Naive thymus-derived CD4-positive, alpha-beta T cell (primary cell): ENCODE measurements at regions of chr11 and their contacts with region 1.

Region 1: DNA sequence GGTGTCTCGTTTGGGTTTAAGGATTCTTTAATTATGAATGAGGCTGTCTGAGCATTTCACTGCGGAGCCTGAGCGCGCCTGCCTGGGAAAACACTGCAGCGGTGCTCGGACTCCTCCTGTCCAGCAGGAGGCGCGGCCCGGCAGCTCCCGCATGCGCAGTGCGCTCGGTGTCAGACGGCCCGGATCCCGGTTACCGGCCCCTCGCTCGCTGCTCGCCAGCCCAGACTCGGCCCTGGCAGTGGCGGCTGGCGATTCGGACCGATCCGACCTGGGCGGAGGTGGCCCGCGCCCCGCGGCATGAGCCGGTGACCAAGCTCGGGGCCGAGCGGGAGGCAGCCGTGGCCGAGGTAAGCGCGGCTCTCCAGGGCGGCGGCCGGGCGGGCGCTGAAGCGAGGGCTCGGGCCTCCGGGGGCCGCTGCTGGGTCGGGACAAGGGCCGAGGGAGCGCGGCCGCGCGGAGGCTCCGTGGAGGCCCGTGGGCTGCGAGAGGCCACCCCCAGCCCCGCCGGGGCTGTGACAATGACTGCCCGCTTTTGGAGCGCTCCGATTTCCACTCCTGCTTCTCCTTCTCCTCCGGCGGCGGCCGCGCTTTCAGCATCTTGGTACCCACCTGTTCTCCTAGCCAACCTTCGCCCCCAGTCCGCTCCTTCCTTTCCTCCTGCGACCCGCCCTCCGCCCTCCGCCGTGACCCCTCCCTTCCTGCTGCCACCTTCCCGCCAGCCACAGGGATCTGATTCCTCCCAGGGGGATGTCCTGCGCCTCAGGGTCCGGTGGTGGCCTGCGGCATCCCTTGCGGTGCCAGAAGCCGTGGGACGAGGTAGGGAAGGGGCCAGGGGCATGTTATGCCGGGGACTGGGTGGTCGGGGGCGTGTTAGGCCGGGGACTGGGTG is at the start of gene EXT2:
- DNase-seq: peak; percentile 71 to 90 (median 83)
- ATAC-seq: peak; percentile 97
- H3K4me3 ChIP-seq: peak within 1 kb of the TSS; percentile 74
- H3K4me3 Mint-ChIP-seq: peak within 1 kb of the TSS; percentile 78 to 94 (median 87)
- H3K27ac ChIP-seq: peak within 1 kb of the TSS; percentile 76
- H3K27ac Mint-ChIP-seq: peak within 1 kb of the TSS in 8 of 9 donors; percentile 19 to 86 (median 70)
- H3K4me1 ChIP-seq: peaks cover 9 to 15% of the 10 kb centered on the region in 2 donors
- H3K4me1 Mint-ChIP-seq: peaks cover 25 to 53% (median 40%) of the 10 kb centered on the region in 7 donors
- H3K27me3 ChIP-seq: no peaks in the 10 kb centered on the region
- H3K27me3 Mint-ChIP-seq: peaks cover 0 to 3% (median 0%) of the 10 kb centered on the region in 5 donors
- total RNA-seq, gene EXT2: 27.2 to 33.4 (median 30.7) TPM

Region 2: DNA sequence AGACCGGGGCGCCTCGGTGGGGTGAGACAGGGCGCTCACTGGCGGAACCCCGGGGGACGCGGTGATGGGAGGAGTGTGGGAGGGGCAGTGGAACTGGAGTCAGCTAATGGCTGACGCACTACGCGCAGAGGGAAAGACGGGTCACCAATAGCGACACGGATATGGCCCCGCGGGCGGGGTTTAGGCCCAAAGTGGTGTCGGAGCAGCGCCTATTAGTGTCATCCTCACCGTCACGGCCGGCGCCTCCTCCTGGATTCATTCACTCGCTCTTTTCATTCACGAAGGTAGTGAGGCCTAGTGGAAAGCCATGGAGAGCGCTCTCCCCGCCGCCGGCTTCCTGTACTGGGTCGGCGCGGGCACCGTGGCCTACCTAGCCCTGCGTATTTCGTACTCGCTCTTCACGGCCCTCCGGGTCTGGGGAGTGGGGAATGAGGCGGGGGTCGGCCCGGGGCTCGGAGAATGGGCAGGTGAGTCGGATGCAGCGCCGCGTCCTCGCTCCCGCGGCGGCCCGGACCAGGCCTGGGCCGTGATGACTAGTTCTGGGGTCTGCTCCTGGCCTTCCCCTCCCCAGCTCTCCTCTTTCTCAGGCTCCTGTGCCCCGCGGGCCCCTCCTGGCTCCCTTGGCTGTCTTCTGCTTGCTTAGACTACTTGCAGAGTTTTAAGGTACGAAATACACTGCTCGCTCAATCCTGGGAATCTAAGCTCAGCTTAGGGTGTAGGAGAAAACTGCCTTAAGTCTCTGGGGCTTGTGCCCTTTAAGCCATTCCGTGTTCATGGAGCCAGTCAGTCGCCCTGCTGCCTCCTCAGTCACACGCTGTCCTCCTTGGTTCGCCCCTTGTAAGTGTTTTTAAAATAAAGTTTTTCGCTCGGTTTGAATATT is 415.0 kb before region 1 on chr11 and contains the start of gene HSD17B12:
- CTCF ChIA-PET with region 1: no interaction called
- POLR2A ChIA-PET with region 1: no interaction called
- intact Hi-C with region 1: loop called (anchors 10 kb)
- DNase-seq: peak; percentile 91 to 100 (median 99)
- ATAC-seq: peak; percentile 99
- H3K4me3 ChIP-seq: peak within 1 kb of the TSS; percentile 81
- H3K4me3 Mint-ChIP-seq: peak within 1 kb of the TSS; percentile 85 to 99 (median 96)
- H3K27ac ChIP-seq: peak within 1 kb of the TSS; percentile 89
- H3K27ac Mint-ChIP-seq: peak within 1 kb of the TSS; percentile 84 to 98 (median 97)
- H3K4me1 ChIP-seq: peaks cover 4 to 8% of the 10 kb centered on the region in 2 donors
- H3K4me1 Mint-ChIP-seq: peaks cover 11 to 59% (median 43%) of the 10 kb centered on the region in 7 donors
- H3K27me3 ChIP-seq: no peaks in the 10 kb centered on the region
- H3K27me3 Mint-ChIP-seq: peaks cover 0 to 14% (median 2%) of the 10 kb centered on the region in 5 donors
- total RNA-seq, gene HSD17B12: 21.1 to 39.5 (median 24.7) TPM

Region 3: GRCh38 chr11:44065841-44066731 is 29.7 kb before region 1 on chr11 and contains the start of gene ACCS:
- CTCF ChIA-PET with region 1: interaction called, 10 read pairs
- POLR2A ChIA-PET with region 1: interaction called, 3 read pairs
- intact Hi-C with region 1: loop called (anchors 1 kb)
- DNase-seq: peak; percentile 80 to 91 (median 88)
- ATAC-seq: peak; percentile 98
- H3K4me3 ChIP-seq: peak within 1 kb of the TSS; percentile 88
- H3K4me3 Mint-ChIP-seq: peak within 1 kb of the TSS; percentile 79 to 97 (median 94)
- H3K27ac ChIP-seq: peak within 1 kb of the TSS; percentile 87
- H3K27ac Mint-ChIP-seq: peak within 1 kb of the TSS; percentile 84 to 97 (median 94)
- H3K4me1 ChIP-seq: peaks cover 6 to 12% of the 10 kb centered on the region in 2 donors
- H3K4me1 Mint-ChIP-seq: peaks cover 12 to 53% (median 26%) of the 10 kb centered on the region in 7 donors
- H3K27me3 ChIP-seq: no peaks in the 10 kb centered on the region
- H3K27me3 Mint-ChIP-seq: no peaks in the 10 kb centered on the region
- total RNA-seq, gene ACCS: 25.1 to 79.2 (median 57.6) TPM

Region 4: GRCh38 chr11:44120169-44120568 is 24.4 kb after region 1 on chr11:
- CTCF ChIA-PET with region 1: interaction called, 11 read pairs
- POLR2A ChIA-PET with region 1: no interaction called
- intact Hi-C with region 1: loop called in 1 of 2 experiments (anchors 2 kb)
- DNase-seq: no peak
- ATAC-seq: no peak
- H3K4me3 ChIP-seq: no peak overlapping the region
- H3K4me3 Mint-ChIP-seq: no peak overlapping the region
- H3K27ac ChIP-seq: no peak overlapping the region
- H3K27ac Mint-ChIP-seq: no peak overlapping the region
- H3K4me1 ChIP-seq: no peaks in the 10 kb centered on the region
- H3K4me1 Mint-ChIP-seq: peaks cover 0 to 12% (median 0%) of the 10 kb centered on the region in 7 donors
- H3K27me3 ChIP-seq: no peaks in the 10 kb centered on the region
- H3K27me3 Mint-ChIP-seq: no peaks in the 10 kb centered on the region

Region 5: DNA sequence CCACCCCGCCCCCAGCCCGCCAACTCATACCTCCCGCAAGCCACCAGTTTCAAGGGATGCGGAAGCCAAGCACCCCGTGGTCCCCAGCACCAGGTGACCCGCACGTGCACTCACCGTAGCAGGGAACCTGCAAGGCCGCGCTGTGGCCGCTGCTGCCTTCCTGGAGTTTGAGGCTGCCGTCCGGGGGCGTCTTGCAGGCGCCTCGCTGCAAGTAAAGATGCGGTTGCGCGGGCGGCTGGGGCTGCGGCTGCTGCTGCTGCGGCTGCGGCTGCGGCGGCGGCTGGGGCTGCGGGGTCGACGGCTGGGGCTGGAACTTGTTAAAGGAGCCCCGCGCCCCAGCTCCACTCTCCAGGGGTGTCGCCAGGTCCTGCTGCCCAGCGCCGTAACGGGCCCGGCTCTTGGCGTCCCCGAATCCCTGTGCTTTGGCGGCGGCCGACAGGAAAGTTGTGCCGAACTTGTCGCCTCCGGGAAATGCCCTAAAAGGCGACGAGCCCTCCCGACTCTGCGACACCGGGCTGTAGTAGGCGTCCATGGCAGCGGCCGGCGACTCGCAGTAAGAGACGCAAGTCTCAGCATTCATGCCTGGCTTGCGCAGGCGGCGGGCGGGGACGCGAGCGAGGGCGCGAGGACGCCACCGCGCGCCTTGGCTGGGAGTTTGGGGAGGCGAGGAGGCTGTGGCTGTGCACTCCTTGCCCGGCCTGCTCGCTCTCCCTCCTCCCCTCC is 213.9 kb after region 1 on chr11 and contains the start of gene ALX4:
- CTCF ChIA-PET with region 1: no interaction called
- POLR2A ChIA-PET with region 1: no interaction called
- intact Hi-C with region 1: loop called in 1 of 2 experiments (anchors 10 kb)
- DNase-seq: peak in 1 of 9 donors; percentile 47
- ATAC-seq: no peak
- H3K4me3 ChIP-seq: no peak within 1 kb of the TSS
- H3K4me3 Mint-ChIP-seq: peak within 1 kb of the TSS in 9 of 10 donors; percentile 50 to 72 (median 60)
- H3K27ac ChIP-seq: no peak within 1 kb of the TSS
- H3K27ac Mint-ChIP-seq: peak within 1 kb of the TSS in 1 of 9 donors; percentile 60
- H3K4me1 ChIP-seq: peaks cover 5% of the 10 kb centered on the region in 2 donors
- H3K4me1 Mint-ChIP-seq: peaks cover 15 to 37% (median 31%) of the 10 kb centered on the region in 7 donors
- H3K27me3 ChIP-seq: peaks cover 3 to 10% of the 10 kb centered on the region in 2 donors
- H3K27me3 Mint-ChIP-seq: peaks cover 78 to 95% (median 81%) of the 10 kb centered on the region in 5 donors
- total RNA-seq, gene ALX4: not detected

Region 6: DNA sequence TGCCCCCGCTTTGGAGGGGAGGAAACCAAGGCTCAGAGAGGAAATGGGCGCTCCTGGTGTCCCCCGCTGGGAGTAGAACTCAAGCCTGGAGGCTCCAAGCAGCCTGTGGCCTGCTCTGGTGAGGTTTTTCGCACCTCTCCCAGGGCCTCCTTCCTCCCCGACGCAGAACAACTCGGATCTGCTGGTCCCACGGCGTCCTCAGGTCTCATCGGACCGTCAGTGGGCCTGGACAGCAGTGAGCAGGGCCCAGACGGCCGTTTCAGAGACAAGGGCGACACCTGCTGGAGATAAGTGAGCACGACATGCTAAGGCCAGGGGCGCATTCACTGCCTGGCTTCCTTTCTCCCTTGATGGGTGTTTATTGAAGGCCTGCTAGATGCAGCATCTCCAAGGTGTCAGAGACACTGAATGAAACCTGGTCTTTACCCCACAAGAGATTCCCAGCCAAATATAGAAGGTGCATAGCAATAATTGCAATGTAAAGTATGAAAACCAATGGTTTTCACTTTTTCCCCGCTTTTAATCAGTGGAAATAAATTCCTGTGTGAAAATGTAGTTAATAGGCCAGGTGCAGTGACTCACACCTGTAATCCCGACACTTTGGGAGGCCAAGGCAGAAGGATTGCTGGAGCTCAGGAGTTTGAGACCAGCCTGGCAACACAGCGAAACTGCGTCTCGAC is 442.8 kb after region 1 on chr11:
- CTCF ChIA-PET with region 1: no interaction called
- POLR2A ChIA-PET with region 1: no interaction called
- intact Hi-C with region 1: loop called (anchors 1 kb)
- DNase-seq: peak; percentile 26 to 74 (median 57)
- ATAC-seq: peak; percentile 90
- H3K4me3 ChIP-seq: no peak overlapping the region
- H3K4me3 Mint-ChIP-seq: no peak overlapping the region
- H3K27ac ChIP-seq: no peak overlapping the region
- H3K27ac Mint-ChIP-seq: peak overlapping the region in 1 of 9 donors; percentile 48
- H3K4me1 ChIP-seq: no peaks in the 10 kb centered on the region
- H3K4me1 Mint-ChIP-seq: peaks cover 0 to 6% (median 0%) of the 10 kb centered on the region in 7 donors
- H3K27me3 ChIP-seq: no peaks in the 10 kb centered on the region
- H3K27me3 Mint-ChIP-seq: peaks cover 0 to 4% (median 3%) of the 10 kb centered on the region in 5 donors

Region 7: GRCh38 chr11:45354976-45355705 is 1259.4 kb after region 1 on chr11:
- CTCF ChIA-PET with region 1: no interaction called
- POLR2A ChIA-PET with region 1: no interaction called
- intact Hi-C with region 1: loop called in 1 of 2 experiments (anchors 5 kb)
- DNase-seq: peak; percentile 77 to 91 (median 88)
- ATAC-seq: peak; percentile 96
- H3K4me3 ChIP-seq: peak overlapping the region; percentile 93
- H3K4me3 Mint-ChIP-seq: peak overlapping the region; percentile 75 to 87 (median 82)
- H3K27ac ChIP-seq: peak overlapping the region; percentile 73
- H3K27ac Mint-ChIP-seq: peak overlapping the region; percentile 70 to 91 (median 83)
- H3K4me1 ChIP-seq: peaks cover 0 to 5% of the 10 kb centered on the region in 2 donors
- H3K4me1 Mint-ChIP-seq: peaks cover 9 to 31% (median 26%) of the 10 kb centered on the region in 7 donors
- H3K27me3 ChIP-seq: no peaks in the 10 kb centered on the region
- H3K27me3 Mint-ChIP-seq: peaks cover 0 to 28% (median 7%) of the 10 kb centered on the region in 5 donors